ENCODE measurements at regions of chr6 and their contacts with region 1.

Region 1: GRCh38 chr6:132544826-132545225 is 6.7 kb downstream of the TAAR9 start:
- DNase-seq: no peak
- H3K4me3 ChIP-seq: no peak overlapping the region
- H3K27ac ChIP-seq: no peak overlapping the region
- H3K4me1 ChIP-seq: peaks cover 0 to 3% (median 0%) of the 10 kb centered on the region in 4 experiments; a peak in 1 of 7 replicates
- H3K27me3 ChIP-seq: no peaks in the 10 kb centered on the region
- CTCF ChIP-seq: no peak
- EP300 ChIP-seq: no peak
- POLR2A ChIP-seq: no peak
- RAD21 ChIP-seq: no peak

Region 2: GRCh38 chr6:132530293-132530974 is 14.4 kb before region 1 on chr6:
- CTCF ChIA-PET with region 1: interaction called, 14 read pairs
- POLR2A ChIA-PET with region 1: no interaction called
- DNase-seq: peak in 1 of 2 experiments; percentile 77
- H3K4me3 ChIP-seq: peak overlapping the region in 1 of 4 experiments; percentile 38; a peak in 1 of 8 replicates
- H3K27ac ChIP-seq: no peak overlapping the region
- H3K4me1 ChIP-seq: peaks cover 0 to 2% (median 0%) of the 10 kb centered on the region in 4 experiments; a peak in 2 of 7 replicates
- H3K27me3 ChIP-seq: no peaks in the 10 kb centered on the region
- CTCF ChIP-seq: peak in 2 of 3 experiments; percentile 64 to 71; a peak in 3 of 4 replicates
- EP300 ChIP-seq: no peak
- POLR2A ChIP-seq: no peak
- RAD21 ChIP-seq: peak; percentile 85

Measured in H1 (cell line).